ENCODE measurements at regions of chr1 and their contacts with region 1.

Region 1: DNA sequence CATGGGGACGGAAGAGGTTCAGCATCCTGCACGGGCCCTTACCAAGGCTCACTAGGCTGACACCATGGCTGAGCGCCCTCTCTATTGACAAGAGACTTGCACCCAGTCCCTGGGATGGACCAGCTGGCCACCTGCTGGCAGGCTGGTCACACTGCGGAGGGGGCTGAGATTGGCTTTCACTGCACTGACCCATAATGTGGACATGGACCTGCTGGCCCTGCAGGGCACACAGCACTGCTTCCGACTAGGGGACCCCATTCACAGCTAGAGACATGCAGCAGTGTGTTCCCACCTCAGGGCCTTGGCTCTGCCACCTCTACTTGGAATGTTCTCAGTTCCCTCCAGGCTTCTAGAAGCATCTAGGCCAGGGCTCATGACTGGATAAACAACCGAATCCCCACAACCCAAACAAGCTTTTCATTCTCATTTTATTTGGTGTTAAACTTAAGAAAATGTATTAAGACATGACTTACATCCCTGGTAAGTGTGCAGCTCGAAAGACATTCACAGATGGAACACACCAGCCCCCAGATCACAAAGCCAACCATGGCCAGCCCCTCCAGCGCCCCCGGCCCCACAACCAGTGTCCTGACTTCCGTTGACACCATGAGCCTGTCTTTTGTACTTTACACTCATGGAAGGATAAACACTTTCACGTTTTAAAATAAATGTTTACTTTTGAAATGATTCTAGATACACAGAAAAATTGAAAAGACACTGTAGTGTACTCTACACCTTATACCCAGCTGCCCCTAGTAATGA is 9.3 kb upstream of the SRARP start:
- DNase-seq: peak; percentile 68 to 78
- ATAC-seq: peak; percentile 73 to 89 (median 82)
- H3K4me3 ChIP-seq: no peak overlapping the region
- H3K27ac ChIP-seq: no peak overlapping the region
- H3K4me1 ChIP-seq: no peaks in the 10 kb centered on the region
- H3K27me3 ChIP-seq: no peaks in the 10 kb centered on the region
- CTCF ChIP-seq: peak; percentile 66

Region 2: GRCh38 chr1:15816674-15817073 is 178.1 kb before region 1 on chr1:
- intact Hi-C with region 1: loop called (anchors 2 to 5 kb)
- DNase-seq: no peak
- ATAC-seq: no peak
- H3K4me3 ChIP-seq: no peak overlapping the region
- H3K27ac ChIP-seq: no peak overlapping the region
- H3K4me1 ChIP-seq: no peaks in the 10 kb centered on the region
- H3K27me3 ChIP-seq: no peaks in the 10 kb centered on the region
- CTCF ChIP-seq: no peak

Region 3: GRCh38 chr1:16109571-16109970 is 114.8 kb after region 1 on chr1:
- intact Hi-C with region 1: no loop called
- DNase-seq: no peak
- ATAC-seq: no peak
- H3K4me3 ChIP-seq: no peak overlapping the region
- H3K27ac ChIP-seq: no peak overlapping the region
- H3K4me1 ChIP-seq: no peaks in the 10 kb centered on the region
- H3K27me3 ChIP-seq: peaks cover 0 to 3% (median 0%) of the 10 kb centered on the region in 3 donors
- CTCF ChIP-seq: no peak

Region 4: DNA sequence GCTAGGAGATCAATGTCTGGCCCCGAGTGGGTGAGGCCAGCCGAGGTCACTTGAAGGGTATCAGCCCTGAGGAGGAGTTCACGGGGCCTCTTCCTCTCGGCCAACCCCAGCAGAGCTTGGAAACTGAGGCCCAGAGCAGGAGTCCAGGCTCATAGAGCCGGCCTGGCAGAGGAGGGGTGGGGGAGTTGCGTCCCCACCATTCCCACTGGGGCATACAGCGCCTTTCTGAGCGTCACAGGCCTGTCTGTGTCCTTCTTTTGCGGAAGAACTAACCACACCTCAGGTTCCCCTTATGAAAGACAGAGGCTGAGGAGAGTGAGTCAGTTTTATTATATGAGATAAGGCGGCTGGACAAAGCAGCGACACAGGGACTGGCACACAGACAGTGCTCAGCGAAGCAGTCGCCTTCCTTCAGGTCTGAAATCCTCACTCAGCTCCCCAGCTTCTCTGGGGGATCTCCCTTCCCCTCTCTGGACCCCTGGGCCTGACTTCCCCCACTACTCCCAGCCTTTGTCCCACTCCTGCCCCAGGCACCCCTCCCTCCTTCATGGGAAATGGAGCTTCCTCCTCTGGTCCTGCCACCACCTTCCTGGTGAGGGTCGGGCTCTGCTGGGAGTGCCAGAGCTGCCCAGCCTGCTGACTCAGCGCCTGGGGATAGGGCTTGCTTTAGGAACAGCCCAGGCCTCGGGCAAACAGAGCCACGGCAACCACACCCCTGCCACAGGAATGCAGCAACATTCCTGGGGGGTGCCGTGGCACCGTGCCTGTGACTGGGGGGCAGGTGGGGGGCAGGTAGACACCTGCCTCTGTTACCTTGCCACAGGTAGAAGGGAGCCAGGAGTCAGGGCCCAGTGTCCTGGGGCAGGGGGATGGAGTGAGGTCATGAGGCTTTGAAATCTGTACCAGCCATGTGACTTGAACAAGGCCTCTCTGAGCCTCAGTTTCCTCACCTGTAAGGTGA is 178.5 kb after region 1 on chr1:
- intact Hi-C with region 1: loop called in 1 of 2 experiments (anchors 5 kb)
- DNase-seq: no peak
- ATAC-seq: no peak
- H3K4me3 ChIP-seq: no peak overlapping the region
- H3K27ac ChIP-seq: no peak overlapping the region
- H3K4me1 ChIP-seq: peaks cover 9% of the 10 kb centered on the region
- H3K27me3 ChIP-seq: peaks cover 0 to 28% (median 2%) of the 10 kb centered on the region in 3 donors
- CTCF ChIP-seq: no peak

Measured in psoas muscle (tissue), 8 donors.